Dorsolateral prefrontal cortex (tissue), 120 donors: ENCODE measurements at regions of chr11 and their contacts with region 1.

Region 1: DNA sequence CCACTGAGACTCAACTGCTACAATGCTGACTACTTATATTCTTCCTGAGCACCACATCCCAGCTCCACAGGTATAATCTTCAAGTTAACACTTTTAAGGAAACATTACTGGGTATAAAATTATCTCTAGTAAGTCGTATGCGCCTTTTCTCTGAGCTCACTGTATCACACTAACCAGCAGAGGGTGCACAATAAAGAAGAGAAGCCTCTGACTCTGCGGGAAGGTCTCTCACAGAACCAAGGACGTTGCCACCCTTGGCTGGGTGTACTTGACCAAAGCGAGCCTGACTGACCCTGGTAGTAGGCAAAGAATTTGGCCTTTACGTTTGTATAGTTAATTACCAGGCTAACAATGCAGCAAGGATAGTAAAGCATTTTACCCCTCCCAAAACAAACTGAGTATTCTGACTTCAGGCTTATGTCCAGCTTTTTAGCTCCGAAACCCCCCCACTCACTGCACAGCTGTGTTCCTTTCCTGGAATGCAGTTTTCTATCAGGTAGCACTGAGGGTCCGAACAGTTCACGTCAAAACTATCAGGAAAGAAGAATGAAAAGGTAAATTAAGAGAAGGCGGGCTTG is at the start of gene BTBD18:
- DNase-seq: no peak
- H3K4me3 ChIP-seq: no peak within 1 kb of the TSS
- H3K27ac ChIP-seq: peak within 1 kb of the TSS in 4 of 59 donors; percentile 36 to 46 (median 42)
- H3K27me3 ChIP-seq: no peaks in the 10 kb centered on the region
- CTCF ChIP-seq: peak in 52 of 56 donors; percentile 26 to 65 (median 46)
- total RNA-seq, gene BTBD18: not detected

Region 2: DNA sequence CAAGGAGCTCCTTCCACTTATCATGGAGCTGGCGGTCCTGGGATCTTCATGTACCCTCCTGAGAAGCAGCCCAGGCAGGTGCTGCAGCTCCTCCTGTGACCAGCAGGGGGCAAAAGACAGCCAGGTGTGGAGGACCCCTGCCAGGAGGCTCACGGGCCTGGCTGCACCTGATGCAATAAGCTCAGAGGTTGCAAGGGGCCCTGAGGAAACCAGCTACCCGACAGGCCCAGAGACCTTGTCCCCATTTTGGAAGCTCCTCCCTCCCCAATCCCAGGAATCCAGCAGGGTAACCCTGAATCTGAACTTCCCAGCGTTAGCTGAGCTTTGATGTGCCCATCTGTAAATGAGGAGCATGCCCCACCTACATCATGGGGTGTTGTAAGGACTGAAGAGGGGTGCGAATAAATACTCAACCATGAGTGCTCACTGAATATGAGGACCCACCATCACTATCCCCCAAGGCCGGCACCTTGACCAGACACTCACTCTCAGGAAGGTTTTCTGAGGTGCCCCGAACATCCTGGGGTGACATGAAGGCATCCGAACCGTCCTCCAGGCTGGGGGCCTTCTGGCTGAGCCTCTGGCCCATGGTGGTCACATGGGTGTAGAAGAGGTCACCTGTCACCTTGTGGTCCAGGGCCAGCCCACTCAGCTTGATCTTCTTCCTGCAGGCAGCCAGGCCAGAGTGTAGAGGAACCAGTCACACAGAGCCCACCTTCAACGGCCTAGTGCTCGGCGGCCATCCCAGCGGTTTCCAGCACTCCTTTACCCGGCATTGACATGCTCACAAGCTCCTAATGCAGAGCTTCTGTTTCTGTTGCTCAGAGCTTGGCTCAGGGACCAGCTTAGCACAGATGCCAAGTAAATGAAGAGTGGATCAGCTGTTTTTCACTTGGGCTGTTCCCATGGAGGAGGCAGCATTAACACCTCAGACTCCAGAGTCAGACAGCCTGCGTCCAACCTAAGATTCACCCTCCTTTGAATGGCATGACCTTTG is 258.0 kb before region 1 on chr11:
- intact Hi-C with region 1: no loop called
- DNase-seq: peak in 1 of 10 donors; percentile 53
- H3K4me3 ChIP-seq: peak overlapping the region in 1 of 59 donors; percentile 10
- H3K27ac ChIP-seq: peak overlapping the region in 21 of 59 donors; percentile 4 to 72 (median 36)
- H3K27me3 ChIP-seq: no peaks in the 10 kb centered on the region
- CTCF ChIP-seq: peak in 55 of 56 donors; percentile 53 to 83 (median 75)

Region 3: DNA sequence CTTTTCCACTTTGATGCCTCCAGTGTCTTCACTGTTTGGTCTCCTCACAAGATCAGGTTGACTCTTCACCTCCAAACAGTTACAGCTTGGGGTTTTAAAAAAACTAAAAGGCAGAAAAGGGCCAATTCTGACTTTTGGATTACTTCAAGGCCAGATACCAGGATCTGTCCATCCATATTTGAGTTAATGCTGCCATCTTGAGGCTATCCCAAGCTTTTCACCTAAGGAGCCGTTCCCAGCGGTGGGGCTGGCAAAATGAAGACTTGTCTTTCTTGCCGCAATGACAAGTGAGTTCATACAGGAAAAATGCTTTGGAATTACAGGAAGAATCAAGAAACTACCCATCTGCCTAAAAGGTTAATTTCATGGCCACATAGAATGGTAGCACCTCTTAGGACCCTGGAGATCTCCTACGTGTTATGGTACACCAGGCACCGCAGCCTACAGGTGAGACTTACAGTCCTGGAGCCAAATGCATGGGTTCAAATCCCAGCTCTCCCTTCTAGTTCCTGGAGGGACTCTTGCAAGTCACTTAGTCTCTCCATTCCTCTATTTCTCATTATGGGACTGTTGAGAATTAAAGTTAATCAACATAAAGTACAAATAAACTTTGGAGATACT is 762.1 kb after region 1 on chr11:
- intact Hi-C with region 1: loop called in 1 of 2 experiments (anchors 10 kb)
- DNase-seq: peak in 5 of 10 donors; percentile 32 to 55 (median 42)
- H3K4me3 ChIP-seq: peak overlapping the region in 1 of 59 donors; percentile 21
- H3K27ac ChIP-seq: peak overlapping the region in 2 of 59 donors; percentile 38 to 40
- H3K27me3 ChIP-seq: no peaks in the 10 kb centered on the region
- CTCF ChIP-seq: peak; percentile 50 to 83 (median 70)